Caco-2 (cell line): ENCODE measurements at regions of chr3 and their contacts with region 1.

Region 1: DNA sequence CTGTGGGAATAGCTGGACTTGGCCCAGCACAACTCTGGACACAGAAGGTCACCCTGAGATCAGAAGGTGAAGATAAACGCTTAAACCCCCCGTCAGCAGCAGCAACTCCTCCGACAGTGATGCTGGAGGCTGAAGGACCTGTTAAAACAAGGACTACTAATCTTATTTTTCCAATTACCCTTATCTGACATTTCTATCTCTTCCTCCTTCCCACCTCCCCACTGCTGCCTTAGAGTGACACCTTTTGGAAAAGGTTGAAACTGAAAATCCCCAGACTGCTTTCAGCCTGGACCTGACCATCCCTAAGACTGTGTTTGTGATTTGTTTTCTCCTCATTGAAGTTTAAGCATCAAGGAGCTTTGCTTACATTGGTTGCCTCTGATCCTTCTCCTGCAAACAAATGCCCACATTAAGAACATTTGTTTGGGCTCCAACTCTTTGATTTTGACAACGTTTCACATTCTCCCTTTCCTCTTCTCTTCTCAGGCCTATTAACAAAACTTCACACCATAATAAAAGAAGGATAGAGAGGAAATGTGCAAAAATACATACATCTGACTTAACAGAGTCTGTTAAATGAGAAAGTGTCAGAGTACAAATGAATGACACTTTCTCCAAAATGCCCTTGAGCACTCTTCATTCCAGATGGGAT is 410.6 kb upstream of the WNT5A start:
- DNase-seq: peak in 1 of 2 experiments; percentile 32
- H3K4me3 ChIP-seq: no peak overlapping the region
- H3K4me3 Mint-ChIP-seq: no peak overlapping the region
- H3K27ac Mint-ChIP-seq: no peak overlapping the region
- H3K4me1 ChIP-seq: no peaks in the 10 kb centered on the region
- H3K4me1 Mint-ChIP-seq: no peaks in the 10 kb centered on the region
- H3K27me3 ChIP-seq: no peaks in the 10 kb centered on the region
- H3K27me3 Mint-ChIP-seq: peaks cover 3% of the 10 kb centered on the region
- CTCF ChIP-seq: peak; percentile 33 to 40

Region 2: DNA sequence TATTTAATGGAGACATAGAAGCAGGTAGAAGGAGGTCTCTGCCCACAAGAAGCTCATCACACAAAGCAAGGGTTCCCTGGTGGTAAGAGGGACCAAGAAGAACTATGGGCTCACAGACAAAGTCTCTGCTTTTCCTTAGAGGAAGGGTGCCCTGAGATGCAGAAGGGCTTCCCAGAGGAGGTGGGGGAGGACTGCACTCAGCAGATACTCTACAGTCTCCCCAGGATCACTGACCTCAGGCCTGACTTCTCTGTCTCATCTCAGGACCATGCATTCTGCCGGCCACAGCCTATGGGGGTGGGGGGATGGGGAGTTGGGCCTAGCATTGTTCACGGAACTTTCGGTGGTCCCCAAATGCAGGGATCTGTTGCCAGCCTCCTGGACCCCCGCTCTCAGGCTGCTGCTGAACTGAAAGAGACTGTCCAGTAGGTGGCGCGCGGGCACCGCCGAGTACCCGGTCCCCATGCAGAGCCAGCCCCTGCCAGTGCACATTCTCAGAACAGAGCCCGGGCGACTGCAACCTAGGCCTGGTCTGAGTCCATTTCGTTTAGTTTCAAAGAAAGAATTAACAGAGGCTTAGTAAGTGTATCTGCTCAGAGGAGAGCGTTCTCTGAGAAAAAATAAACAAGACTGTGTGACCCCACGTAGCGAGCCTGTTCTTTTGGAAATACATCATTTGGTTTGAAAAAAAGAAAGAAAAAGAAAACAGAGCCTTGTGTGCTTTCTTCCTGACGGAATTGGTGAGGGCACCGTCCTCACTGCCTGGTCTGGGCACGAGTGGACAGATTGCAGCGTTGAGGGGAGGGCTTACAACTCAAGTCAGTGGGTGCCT is 1043.9 kb before region 1 on chr3:
- CTCF ChIA-PET with region 1: no interaction called
- POLR2A ChIA-PET with region 1: no interaction called
- intact Hi-C with region 1: loop called (anchors 5 kb)
- DNase-seq: peak; percentile 64 to 75
- H3K4me3 ChIP-seq: no peak overlapping the region
- H3K4me3 Mint-ChIP-seq: no peak overlapping the region
- H3K27ac Mint-ChIP-seq: no peak overlapping the region
- H3K4me1 ChIP-seq: no peaks in the 10 kb centered on the region
- H3K4me1 Mint-ChIP-seq: no peaks in the 10 kb centered on the region
- H3K27me3 ChIP-seq: no peaks in the 10 kb centered on the region; the same call in 1 of the 2 replicates
- H3K27me3 Mint-ChIP-seq: peaks cover 14% of the 10 kb centered on the region
- CTCF ChIP-seq: peak; percentile 82 to 88

Region 3: DNA sequence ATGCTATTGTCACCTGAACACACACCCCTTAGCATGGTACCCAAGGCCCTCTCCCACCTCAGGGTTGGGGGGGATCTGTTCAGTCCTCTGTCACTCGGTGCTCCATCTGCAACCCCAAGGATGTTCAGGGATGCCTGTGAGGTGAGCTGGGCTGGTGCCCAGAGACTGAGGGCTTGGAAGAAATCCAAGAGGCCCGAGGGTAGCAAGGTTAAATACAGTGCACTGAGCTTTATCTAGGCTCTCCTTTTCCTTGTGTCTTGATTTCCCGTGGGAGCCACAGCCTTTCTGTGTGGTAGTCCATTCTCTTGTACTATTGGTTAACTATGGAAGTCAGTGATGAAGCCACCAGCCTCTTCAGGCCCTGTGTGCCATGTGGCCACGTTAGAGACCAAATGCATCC is 391.9 kb before region 1 on chr3:
- CTCF ChIA-PET with region 1: no interaction called
- POLR2A ChIA-PET with region 1: no interaction called
- intact Hi-C with region 1: loop called (anchors 5 kb)
- DNase-seq: no peak
- H3K4me3 ChIP-seq: no peak overlapping the region
- H3K4me3 Mint-ChIP-seq: no peak overlapping the region
- H3K27ac Mint-ChIP-seq: no peak overlapping the region
- H3K4me1 ChIP-seq: no peaks in the 10 kb centered on the region
- H3K4me1 Mint-ChIP-seq: no peaks in the 10 kb centered on the region
- H3K27me3 ChIP-seq: no peaks in the 10 kb centered on the region
- H3K27me3 Mint-ChIP-seq: no peaks in the 10 kb centered on the region
- CTCF ChIP-seq: no peak

Region 4: GRCh38 chr3:56042326-56042951 is 144.7 kb after region 1 on chr3:
- CTCF ChIA-PET with region 1: no interaction called
- POLR2A ChIA-PET with region 1: no interaction called
- intact Hi-C with region 1: loop called (anchors 1 kb)
- DNase-seq: peak in 1 of 2 experiments; percentile 47
- H3K4me3 ChIP-seq: no peak overlapping the region
- H3K4me3 Mint-ChIP-seq: no peak overlapping the region
- H3K27ac Mint-ChIP-seq: no peak overlapping the region
- H3K4me1 ChIP-seq: peaks cover 36% of the 10 kb centered on the region
- H3K4me1 Mint-ChIP-seq: peaks cover 5% of the 10 kb centered on the region
- H3K27me3 ChIP-seq: no peaks in the 10 kb centered on the region
- H3K27me3 Mint-ChIP-seq: no peaks in the 10 kb centered on the region
- CTCF ChIP-seq: peak; percentile 55 to 56

Region 5: DNA sequence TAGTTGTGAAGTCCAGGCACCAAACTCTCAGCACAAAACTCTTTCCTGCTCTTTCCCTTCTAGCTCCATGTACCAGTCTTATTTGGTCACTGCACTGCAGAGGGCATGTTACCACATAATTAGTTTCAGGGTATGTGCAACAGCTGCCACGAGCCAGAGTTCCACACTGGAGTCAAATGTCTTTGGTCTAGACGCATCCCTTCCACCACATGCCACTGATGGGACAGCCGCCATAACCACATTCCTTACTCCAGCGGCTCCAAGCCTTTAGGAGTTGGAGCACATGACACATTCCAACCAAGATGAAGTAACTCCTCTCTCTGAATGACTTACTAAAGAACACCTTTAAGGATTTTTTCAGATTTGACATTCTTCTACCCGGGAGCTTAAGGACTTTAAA is 417.1 kb after region 1 on chr3:
- CTCF ChIA-PET with region 1: no interaction called
- POLR2A ChIA-PET with region 1: no interaction called
- intact Hi-C with region 1: no loop called
- DNase-seq: peak in 1 of 2 experiments; percentile 6
- H3K4me3 ChIP-seq: no peak overlapping the region
- H3K4me3 Mint-ChIP-seq: no peak overlapping the region
- H3K27ac Mint-ChIP-seq: no peak overlapping the region
- H3K4me1 ChIP-seq: no peaks in the 10 kb centered on the region
- H3K4me1 Mint-ChIP-seq: no peaks in the 10 kb centered on the region
- H3K27me3 ChIP-seq: no peaks in the 10 kb centered on the region
- H3K27me3 Mint-ChIP-seq: peaks cover 18% of the 10 kb centered on the region
- CTCF ChIP-seq: no peak